Posterior vena cava (tissue), 2 donors: ENCODE measurements at regions of chr14 and their contacts with region 1.

Region 1: DNA sequence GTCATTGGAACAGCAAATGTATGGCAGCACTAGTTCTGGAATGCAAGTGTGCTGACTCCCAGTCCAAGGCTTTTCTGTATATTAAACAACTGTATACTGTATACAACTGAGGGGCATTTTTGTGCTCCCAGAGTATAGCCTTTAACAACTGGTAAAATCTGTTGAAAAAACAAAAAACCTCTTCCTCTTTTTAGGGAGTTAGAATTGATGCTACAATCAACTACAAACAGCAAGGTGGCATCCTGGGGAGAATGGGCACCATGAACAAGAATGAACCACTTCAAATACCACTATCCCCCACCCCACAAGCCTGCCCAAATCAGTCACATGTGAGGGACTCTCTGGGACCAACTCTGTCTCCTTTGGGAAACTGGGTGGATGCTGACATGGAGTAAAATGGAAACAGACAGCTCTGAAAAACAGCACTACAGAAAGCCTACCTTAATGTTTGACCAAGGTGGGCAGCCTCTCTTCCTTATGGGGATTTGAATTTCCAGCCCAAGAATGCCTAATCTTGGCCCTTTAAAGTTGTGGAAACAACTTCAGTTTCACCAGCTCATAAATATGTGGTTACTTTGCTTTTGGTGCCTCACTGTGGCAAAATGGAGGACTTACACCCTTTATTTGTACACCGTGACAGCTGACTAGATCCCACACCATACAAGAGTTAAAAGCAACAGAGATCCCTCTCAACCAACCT is 7.5 kb downstream of the VTI1B start:
- DNase-seq: no peak

Region 2: GRCh38 chr14:67619446-67620216 is 47.3 kb before region 1 on chr14 and contains the start of gene ARG2:
- intact Hi-C with region 1: loop called in 1 of 2 experiments (anchors 5 kb)
- DNase-seq: peak; percentile 98
- total RNA-seq, gene ARG2: 1.9 to 5.1 TPM